ENCODE measurements at regions of chr6 and their contacts with region 1.

Region 1: GRCh38 chr6:6486595-6486994 is 101.9 kb upstream of the LY86 start:
- DNase-seq: no peak
- ATAC-seq: no peak
- H3K4me3 ChIP-seq: no peak overlapping the region
- H3K27ac ChIP-seq: no peak overlapping the region
- H3K4me1 ChIP-seq: no peaks in the 10 kb centered on the region
- H3K27me3 ChIP-seq: no peaks in the 10 kb centered on the region
- CTCF ChIP-seq: no peak
- EP300 ChIP-seq: no peak
- POLR2A ChIP-seq: no peak
- RAD21 ChIP-seq: no peak

Region 2: GRCh38 chr6:6474170-6474920 is 12.2 kb before region 1 on chr6:
- CTCF ChIA-PET with region 1: interaction called, 10 read pairs
- POLR2A ChIA-PET with region 1: no interaction called
- RAD21 ChIA-PET with region 1: interaction called, 4 read pairs
- SMC1A ChIA-PET with region 1: interaction called, 4 read pairs
- in situ Hi-C with region 1: no loop called
- intact Hi-C with region 1: no loop called
- DNase-seq: no peak
- ATAC-seq: no peak
- H3K4me3 ChIP-seq: no peak overlapping the region
- H3K27ac ChIP-seq: no peak overlapping the region
- H3K4me1 ChIP-seq: no peaks in the 10 kb centered on the region
- H3K27me3 ChIP-seq: no peaks in the 10 kb centered on the region
- CTCF ChIP-seq: no peak
- EP300 ChIP-seq: no peak
- POLR2A ChIP-seq: no peak
- RAD21 ChIP-seq: no peak

Measured in GM12878 (cell line).